Dorsolateral prefrontal cortex (tissue), 120 donors: ENCODE measurements at regions of chr6 and their contacts with region 1.

Region 1: DNA sequence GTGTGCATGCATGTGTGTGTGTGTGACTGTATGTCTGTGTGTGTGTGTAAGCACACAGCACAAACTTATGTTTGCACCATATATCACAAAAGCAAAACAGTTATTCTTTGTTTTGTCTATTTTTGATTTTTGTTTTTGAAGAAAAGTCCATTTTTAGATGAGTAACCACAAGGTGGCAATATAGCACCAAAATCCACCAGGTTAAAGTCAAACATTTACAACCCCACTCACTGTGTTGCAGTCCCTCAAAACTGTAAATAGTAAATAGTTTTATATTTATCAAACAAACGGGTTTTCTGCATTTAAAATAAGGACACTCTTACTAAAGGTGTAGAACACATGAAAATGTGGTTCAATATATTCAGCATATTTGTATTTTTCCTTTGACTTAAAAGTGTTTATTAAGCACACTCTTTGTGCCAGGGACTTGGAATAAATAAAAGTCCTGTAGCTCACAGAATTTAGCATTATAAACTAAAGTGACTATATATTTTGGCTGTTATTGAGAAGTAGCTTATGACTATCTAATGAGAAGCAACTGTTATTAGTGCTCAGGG is 118.5 kb downstream of the GFRAL start:
- DNase-seq: no peak
- H3K4me3 ChIP-seq: no peak overlapping the region
- H3K27ac ChIP-seq: no peak overlapping the region
- H3K27me3 ChIP-seq: no peaks in the 10 kb centered on the region
- CTCF ChIP-seq: peak; percentile 46 to 85 (median 68)

Region 2: DNA sequence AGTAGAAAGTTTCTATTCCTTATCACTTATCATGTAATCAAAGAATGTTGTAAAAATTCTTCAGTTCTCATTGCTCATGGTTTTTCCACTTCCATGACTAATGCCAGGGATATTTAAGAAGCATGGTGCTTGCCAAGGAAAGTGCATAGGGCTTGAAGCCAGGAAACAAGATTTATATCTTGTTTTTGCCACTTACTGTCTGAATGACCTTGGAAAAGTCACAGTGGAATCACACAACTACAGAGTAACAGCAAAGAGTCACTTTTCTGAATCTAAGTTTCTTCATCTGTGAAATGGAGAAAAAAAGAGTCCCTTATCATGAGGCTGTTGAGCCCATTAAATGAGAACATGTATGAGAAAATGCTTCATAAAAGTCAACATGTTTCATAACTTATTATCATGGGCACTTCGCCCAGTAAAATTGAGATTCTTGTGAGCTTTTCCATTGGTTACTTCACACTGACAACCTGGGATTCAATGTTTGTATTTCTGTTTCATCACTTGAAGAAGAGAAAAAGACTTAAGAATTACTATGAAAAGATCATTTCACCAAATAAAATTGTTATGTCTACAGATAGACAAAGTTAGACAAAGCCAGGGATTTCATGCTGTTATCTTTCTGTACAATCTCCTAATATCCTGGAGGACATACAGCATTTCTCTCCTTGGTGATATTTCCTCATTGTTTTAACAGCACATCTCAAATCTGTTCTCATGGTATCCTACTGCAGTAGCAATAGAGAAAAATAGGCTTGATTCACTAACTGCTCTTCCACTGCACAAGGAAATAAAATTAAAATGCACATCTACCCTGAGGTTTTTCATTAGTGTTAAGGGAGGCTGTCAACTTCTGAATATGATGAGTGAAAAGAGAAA is 437.2 kb after region 1 on chr6:
- intact Hi-C with region 1: loop called in 1 of 2 experiments (anchors 5 kb)
- DNase-seq: no peak
- H3K4me3 ChIP-seq: no peak overlapping the region
- H3K27ac ChIP-seq: no peak overlapping the region
- H3K27me3 ChIP-seq: peaks cover 0 to 12% (median 0%) of the 10 kb centered on the region in 45 donors
- CTCF ChIP-seq: no peak

Region 3: DNA sequence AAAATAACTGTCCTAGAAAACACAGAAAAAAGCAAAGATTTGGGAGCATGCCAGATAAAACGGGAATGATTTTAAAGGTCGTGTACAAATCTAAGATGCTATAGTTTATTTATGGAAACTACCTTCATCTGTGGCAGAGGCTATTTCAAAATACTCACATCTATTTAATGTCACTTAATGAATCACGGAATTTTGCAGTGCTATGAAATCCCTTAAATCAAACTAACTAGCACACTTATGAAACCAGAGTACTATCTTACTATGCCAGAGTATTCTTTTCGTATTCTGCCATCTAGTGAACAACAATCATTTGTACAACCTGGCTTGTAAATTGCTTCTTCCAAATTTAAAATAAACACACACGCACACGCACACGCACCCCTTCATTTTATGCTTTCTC is 507.6 kb after region 1 on chr6:
- intact Hi-C with region 1: loop called (anchors 10 kb)
- DNase-seq: no peak
- H3K4me3 ChIP-seq: peak overlapping the region in 44 of 59 donors; percentile 3 to 57 (median 30)
- H3K27ac ChIP-seq: no peak overlapping the region
- H3K27me3 ChIP-seq: no peaks in the 10 kb centered on the region
- CTCF ChIP-seq: peak in 55 of 56 donors; percentile 16 to 71 (median 44)